Prostate gland (tissue), 2 donors: ENCODE measurements at regions of chr7 and their contacts with region 1.

Region 1: GRCh38 chr7:34061175-34061574 is 155.8 kb downstream of the BMPER start:
- DNase-seq: no peak
- H3K4me3 ChIP-seq: no peak overlapping the region
- H3K27ac ChIP-seq: no peak overlapping the region
- H3K4me1 ChIP-seq: peaks cover 3% of the 10 kb centered on the region
- H3K27me3 ChIP-seq: no peaks in the 10 kb centered on the region
- CTCF ChIP-seq: no peak
- POLR2A ChIP-seq: no peak

Region 2: GRCh38 chr7:33986941-33987588 is 74.1 kb before region 1 on chr7:
- intact Hi-C with region 1: loop called (anchors 5 kb)
- DNase-seq: no peak
- H3K4me3 ChIP-seq: no peak overlapping the region
- H3K27ac ChIP-seq: peak overlapping the region; percentile 9 to 34
- H3K4me1 ChIP-seq: no peaks in the 10 kb centered on the region
- H3K27me3 ChIP-seq: no peaks in the 10 kb centered on the region
- CTCF ChIP-seq: no peak
- POLR2A ChIP-seq: no peak

Region 3: GRCh38 chr7:34155220-34155908 is 94.2 kb after region 1 on chr7:
- intact Hi-C with region 1: no loop called
- DNase-seq: no peak
- H3K4me3 ChIP-seq: no peak overlapping the region
- H3K27ac ChIP-seq: no peak overlapping the region
- H3K4me1 ChIP-seq: peaks cover 11% of the 10 kb centered on the region
- H3K27me3 ChIP-seq: no peaks in the 10 kb centered on the region
- CTCF ChIP-seq: no peak
- POLR2A ChIP-seq: no peak